Activated naive CD4-positive, alpha-beta T cell treated with anti-CD3 and anti-CD28 coated beads for 36 hours (primary cell): ENCODE measurements at regions of chr4 and their contacts with region 1.

Region 1: DNA sequence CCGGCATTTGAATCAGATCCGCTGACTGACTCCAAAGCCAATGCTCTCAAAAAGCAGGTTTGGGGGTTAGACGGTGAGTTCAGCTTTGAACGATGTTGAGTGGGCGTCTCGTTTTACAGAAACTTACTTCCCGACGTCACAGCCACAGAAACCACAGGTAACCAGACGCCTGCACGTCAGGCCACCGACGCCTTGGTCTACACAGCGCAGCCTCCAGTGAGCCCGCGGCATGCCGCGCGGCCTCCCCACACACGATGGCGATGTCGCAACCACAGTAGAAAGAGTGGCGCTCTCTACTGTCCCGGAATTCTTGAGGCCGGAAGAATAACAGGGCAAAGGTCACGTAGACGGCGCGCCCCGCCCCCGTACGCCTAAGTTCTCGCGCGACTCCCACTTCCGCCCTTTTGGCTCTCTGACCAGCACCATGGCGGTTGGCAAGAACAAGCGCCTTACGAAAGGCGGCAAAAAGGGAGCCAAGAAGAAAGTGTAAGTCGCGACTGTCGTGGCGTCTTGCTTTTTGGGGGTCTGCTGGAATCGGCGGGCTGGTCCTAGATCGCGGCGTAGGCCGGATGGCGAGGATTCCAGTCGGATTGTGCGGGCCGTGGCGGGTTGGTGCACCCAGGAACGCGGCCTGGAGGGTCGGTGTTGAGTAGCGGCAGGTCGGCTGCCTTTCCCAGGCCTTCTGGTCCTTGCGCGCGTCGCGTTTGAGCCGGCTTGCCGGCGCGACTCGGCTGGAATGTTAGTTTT is at the start of gene RPS3A:
- DNase-seq: peak; percentile 97
- H3K4me3 Mint-ChIP-seq: peak within 1 kb of the TSS; percentile 96
- H3K27ac Mint-ChIP-seq: peak within 1 kb of the TSS; percentile 100
- H3K4me1 Mint-ChIP-seq: peaks cover 37% of the 10 kb centered on the region
- H3K27me3 Mint-ChIP-seq: peaks cover 4% of the 10 kb centered on the region
- total RNA-seq, gene RPS3A: 3,793 to 3,917 TPM

Region 2: GRCh38 chr4:150886599-150886998 is 212.8 kb before region 1 on chr4:
- CTCF ChIA-PET with region 1: no interaction called
- intact Hi-C with region 1: loop called (anchors 5 kb)
- DNase-seq: no peak
- H3K4me3 Mint-ChIP-seq: no peak overlapping the region
- H3K27ac Mint-ChIP-seq: no peak overlapping the region
- H3K4me1 Mint-ChIP-seq: peaks cover 19% of the 10 kb centered on the region
- H3K27me3 Mint-ChIP-seq: no peaks in the 10 kb centered on the region

Region 3: GRCh38 chr4:151031831-151032605 is 67.4 kb before region 1 on chr4:
- CTCF ChIA-PET with region 1: interaction called, 5 read pairs
- intact Hi-C with region 1: loop called (anchors 1 kb)
- DNase-seq: peak; percentile 44
- H3K4me3 Mint-ChIP-seq: peak overlapping the region; percentile 35
- H3K27ac Mint-ChIP-seq: peak overlapping the region; percentile 85
- H3K4me1 Mint-ChIP-seq: peaks cover 40% of the 10 kb centered on the region
- H3K27me3 Mint-ChIP-seq: no peaks in the 10 kb centered on the region

Region 4: GRCh38 chr4:151887031-151887815 is 787.8 kb after region 1 on chr4:
- CTCF ChIA-PET with region 1: no interaction called
- intact Hi-C with region 1: loop called (anchors 1 kb)
- DNase-seq: peak; percentile 14
- H3K4me3 Mint-ChIP-seq: no peak overlapping the region
- H3K27ac Mint-ChIP-seq: peak overlapping the region; percentile 28
- H3K4me1 Mint-ChIP-seq: peaks cover 21% of the 10 kb centered on the region
- H3K27me3 Mint-ChIP-seq: no peaks in the 10 kb centered on the region

Region 5: DNA sequence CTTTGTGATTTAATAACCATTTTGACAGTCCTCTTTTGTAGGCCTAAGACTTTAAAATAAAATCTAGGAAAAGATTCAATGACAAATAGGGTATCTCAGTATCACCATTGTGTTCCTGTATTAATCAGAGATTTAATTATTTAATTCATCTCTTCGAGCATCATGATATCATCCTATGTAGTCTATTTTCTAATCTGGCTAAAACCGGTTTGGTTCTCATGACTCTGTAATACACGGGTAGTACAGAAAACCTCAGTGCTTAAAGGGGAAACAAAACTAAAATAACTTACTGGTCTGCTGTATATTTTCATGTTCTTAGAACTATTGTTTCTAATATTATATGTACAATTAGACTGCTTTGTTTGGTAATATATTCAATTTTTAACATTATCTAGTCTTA is 1460.2 kb after region 1 on chr4:
- CTCF ChIA-PET with region 1: no interaction called
- intact Hi-C with region 1: loop called (anchors 5 kb)
- DNase-seq: no peak
- H3K4me3 Mint-ChIP-seq: no peak overlapping the region
- H3K27ac Mint-ChIP-seq: no peak overlapping the region
- H3K4me1 Mint-ChIP-seq: peaks cover 15% of the 10 kb centered on the region
- H3K27me3 Mint-ChIP-seq: no peaks in the 10 kb centered on the region